H1 (cell line): ENCODE measurements at regions of chr2 and their contacts with region 1.

Region 1: DNA sequence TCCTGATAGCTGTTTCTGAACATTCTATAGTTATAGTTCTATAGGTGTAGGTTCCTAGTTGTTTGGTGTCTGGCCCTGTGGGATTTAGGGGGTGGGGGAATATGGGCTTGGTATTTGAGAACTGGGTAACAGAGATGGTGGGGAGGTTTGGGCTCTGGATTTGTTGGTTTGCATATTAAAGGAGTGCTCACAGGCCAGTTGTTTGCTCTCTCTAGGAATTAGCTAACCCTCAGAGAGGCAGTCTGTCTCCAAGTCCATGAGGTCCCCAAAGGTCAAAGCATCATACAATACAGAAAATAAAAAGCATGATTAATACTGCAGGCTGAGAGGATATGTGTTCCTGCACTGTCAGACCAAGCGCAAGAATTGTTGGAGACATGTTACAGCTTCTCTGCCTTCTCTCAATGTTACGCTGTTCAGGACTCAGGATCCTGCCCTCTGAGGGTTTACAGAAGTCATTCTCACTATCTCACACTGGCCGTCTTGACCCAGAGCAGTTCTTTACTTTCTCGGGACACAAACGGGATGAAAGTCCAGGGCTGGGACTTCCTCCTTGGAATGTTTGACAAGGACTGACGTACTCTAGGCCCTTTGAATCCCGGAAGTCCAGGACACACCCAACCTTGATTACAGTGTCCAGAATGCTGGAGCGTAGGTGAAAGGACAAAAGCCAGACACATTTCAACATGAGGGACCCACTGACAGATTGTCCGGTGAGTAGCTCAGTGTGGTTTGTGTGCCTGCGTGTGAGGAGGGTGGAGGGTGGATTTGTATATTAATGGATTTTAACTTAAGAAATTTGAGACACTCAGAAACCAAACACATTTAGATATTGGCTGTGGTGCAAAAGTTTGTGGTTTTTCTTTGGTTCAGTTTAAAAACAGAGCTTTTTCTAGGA is at the start of gene NOSTRIN:
- DNase-seq: no peak
- H3K4me3 ChIP-seq: no peak within 1 kb of the TSS
- H3K27ac ChIP-seq: no peak within 1 kb of the TSS
- H3K4me1 ChIP-seq: peaks cover 4 to 22% (median 15%) of the 10 kb centered on the region in 4 experiments; a peak in 5 of 7 replicates
- H3K27me3 ChIP-seq: no peaks in the 10 kb centered on the region
- CTCF ChIP-seq: no peak
- EP300 ChIP-seq: no peak
- POLR2A ChIP-seq: no peak
- RAD21 ChIP-seq: no peak
- total RNA-seq, gene NOSTRIN: not detected in 2 replicates

Region 2: GRCh38 chr2:168773719-168774521 is 28.3 kb before region 1 on chr2:
- CTCF ChIA-PET with region 1: interaction called, 14 read pairs
- POLR2A ChIA-PET with region 1: no interaction called
- DNase-seq: peak in 1 of 2 experiments; percentile 82
- H3K4me3 ChIP-seq: no peak overlapping the region
- H3K27ac ChIP-seq: no peak overlapping the region
- H3K4me1 ChIP-seq: no peaks in the 10 kb centered on the region
- H3K27me3 ChIP-seq: no peaks in the 10 kb centered on the region
- CTCF ChIP-seq: peak; percentile 81 to 91 (median 91)
- EP300 ChIP-seq: no peak
- POLR2A ChIP-seq: no peak
- RAD21 ChIP-seq: peak; percentile 84 to 94

Region 3: GRCh38 chr2:168816369-168816768 is 14.2 kb after region 1 on chr2:
- CTCF ChIA-PET with region 1: interaction called, 11 read pairs
- POLR2A ChIA-PET with region 1: interaction called, 3 read pairs
- DNase-seq: no peak
- H3K4me3 ChIP-seq: no peak overlapping the region
- H3K27ac ChIP-seq: no peak overlapping the region
- H3K4me1 ChIP-seq: peaks cover 0 to 3% (median 0%) of the 10 kb centered on the region in 4 experiments; a peak in 1 of 7 replicates
- H3K27me3 ChIP-seq: no peaks in the 10 kb centered on the region
- CTCF ChIP-seq: no peak
- EP300 ChIP-seq: no peak
- POLR2A ChIP-seq: no peak
- RAD21 ChIP-seq: no peak

Region 4: DNA sequence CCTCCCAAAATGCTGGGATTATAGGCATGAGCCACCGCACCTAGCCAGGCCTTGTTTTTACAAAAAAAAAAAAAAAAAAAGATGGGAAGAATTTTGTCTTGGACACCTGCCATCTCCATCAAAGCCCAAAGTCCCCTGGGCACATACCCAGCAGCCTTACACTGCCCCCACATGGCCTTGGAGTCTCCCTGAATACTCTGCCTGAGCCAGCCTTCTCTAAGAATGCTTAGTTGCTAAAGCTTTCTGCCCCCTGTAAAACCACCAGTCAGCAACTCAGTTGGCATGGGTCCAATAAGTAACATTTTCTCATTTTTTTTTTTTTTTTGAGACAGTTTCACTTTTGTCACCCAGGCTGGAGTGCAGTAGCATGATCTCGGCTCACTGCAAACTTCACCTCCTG is 47.4 kb after region 1 on chr2:
- CTCF ChIA-PET with region 1: no interaction called
- POLR2A ChIA-PET with region 1: no interaction called
- DNase-seq: peak in 1 of 2 experiments; percentile 27
- H3K4me3 ChIP-seq: no peak overlapping the region
- H3K27ac ChIP-seq: no peak overlapping the region
- H3K4me1 ChIP-seq: no peaks in the 10 kb centered on the region
- H3K27me3 ChIP-seq: no peaks in the 10 kb centered on the region
- CTCF ChIP-seq: peak; percentile 56 to 61 (median 59)
- EP300 ChIP-seq: no peak
- POLR2A ChIP-seq: no peak
- RAD21 ChIP-seq: peak; percentile 73 to 79